GM12878 (cell line): ENCODE measurements at regions of chr9 and their contacts with region 1.

Region 1: GRCh38 chr9:68584189-68585033 is 43.7 kb upstream of the TMEM252 start:
- DNase-seq: peak; percentile 58
- ATAC-seq: peak; percentile 100
- H3K4me3 ChIP-seq: no peak overlapping the region
- H3K27ac ChIP-seq: no peak overlapping the region
- H3K4me1 ChIP-seq: no peaks in the 10 kb centered on the region
- H3K27me3 ChIP-seq: no peaks in the 10 kb centered on the region
- CTCF ChIP-seq: peak; percentile 99 to 100 (median 100); a peak in 5 of 6 replicates
- EP300 ChIP-seq: no peak
- POLR2A ChIP-seq: no peak
- RAD21 ChIP-seq: peak; percentile 100

Region 2: DNA sequence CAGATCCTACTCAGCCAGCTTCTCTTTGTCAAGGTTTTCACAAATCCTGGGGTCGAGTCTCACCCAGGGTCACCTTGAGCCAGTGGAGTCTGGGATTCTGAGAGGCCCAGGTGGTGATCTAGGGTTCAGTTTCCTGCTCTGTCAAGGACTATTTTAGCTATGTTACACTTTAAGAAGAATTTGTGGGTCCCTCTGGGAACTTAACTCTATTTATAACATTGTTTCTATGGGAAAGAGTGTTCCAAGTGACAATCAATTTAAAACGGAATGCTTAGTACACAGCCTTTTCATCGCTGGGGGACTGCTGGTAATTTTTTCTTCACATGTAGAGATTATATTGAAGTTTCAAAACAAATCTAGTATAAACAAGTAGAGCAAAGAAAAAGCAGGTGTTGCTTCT is 16.8 kb before region 1 on chr9:
- CTCF ChIA-PET with region 1: interaction called, 19 read pairs
- POLR2A ChIA-PET with region 1: no interaction called
- RAD21 ChIA-PET with region 1: interaction called, 6 read pairs
- SMC1A ChIA-PET with region 1: interaction called, 4 read pairs
- in situ Hi-C with region 1: no loop called
- intact Hi-C with region 1: no loop called
- DNase-seq: no peak
- ATAC-seq: no peak
- H3K4me3 ChIP-seq: no peak overlapping the region
- H3K27ac ChIP-seq: no peak overlapping the region
- H3K4me1 ChIP-seq: no peaks in the 10 kb centered on the region
- H3K27me3 ChIP-seq: peaks cover 4 to 8% of the 10 kb centered on the region in 2 experiments
- CTCF ChIP-seq: no peak
- EP300 ChIP-seq: no peak
- POLR2A ChIP-seq: no peak
- RAD21 ChIP-seq: no peak

Region 3: DNA sequence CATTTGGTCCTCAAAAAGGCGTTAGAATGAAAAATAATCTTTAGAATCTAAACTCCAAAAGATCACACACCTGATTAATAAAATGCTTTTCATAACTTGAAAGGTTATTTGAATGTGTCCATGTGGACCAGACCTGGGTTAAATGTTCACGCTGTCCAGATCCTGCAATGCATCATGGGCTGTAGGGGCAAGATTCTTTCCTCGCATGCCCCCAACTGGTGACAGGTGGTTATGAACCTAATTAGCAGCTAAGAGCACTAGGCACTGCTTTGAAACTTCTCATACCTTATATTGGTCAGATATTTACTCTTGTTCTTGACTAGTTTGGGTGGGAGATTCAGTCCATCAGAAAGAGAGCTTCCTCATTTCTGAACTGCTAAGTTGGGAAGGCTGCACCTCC is 101.4 kb after region 1 on chr9:
- CTCF ChIA-PET with region 1: interaction called, 68 read pairs
- POLR2A ChIA-PET with region 1: no interaction called
- RAD21 ChIA-PET with region 1: interaction called, 9 read pairs
- SMC1A ChIA-PET with region 1: interaction called, 61 read pairs
- in situ Hi-C with region 1: loop called (anchors 5 kb)
- intact Hi-C with region 1: loop called (anchors 1 kb)
- DNase-seq: no peak
- ATAC-seq: peak; percentile 99
- H3K4me3 ChIP-seq: no peak overlapping the region
- H3K27ac ChIP-seq: no peak overlapping the region
- H3K4me1 ChIP-seq: no peaks in the 10 kb centered on the region
- H3K27me3 ChIP-seq: no peaks in the 10 kb centered on the region
- CTCF ChIP-seq: peak; percentile 73 to 86 (median 77)
- EP300 ChIP-seq: no peak
- POLR2A ChIP-seq: no peak
- RAD21 ChIP-seq: peak; percentile 90

Region 4: GRCh38 chr9:68762570-68762969 is 178.2 kb after region 1 on chr9:
- CTCF ChIA-PET with region 1: no interaction called
- POLR2A ChIA-PET with region 1: no interaction called
- RAD21 ChIA-PET with region 1: no interaction called
- SMC1A ChIA-PET with region 1: no interaction called
- in situ Hi-C with region 1: loop called (anchors 5 kb)
- intact Hi-C with region 1: no loop called
- DNase-seq: no peak
- ATAC-seq: peak; percentile 51; the same call in 2 of the 3 replicates
- H3K4me3 ChIP-seq: no peak overlapping the region
- H3K27ac ChIP-seq: no peak overlapping the region
- H3K4me1 ChIP-seq: peaks cover 3% of the 10 kb centered on the region; the same call in 1 of the 2 replicates
- H3K27me3 ChIP-seq: no peaks in the 10 kb centered on the region
- CTCF ChIP-seq: no peak
- EP300 ChIP-seq: no peak
- POLR2A ChIP-seq: no peak
- RAD21 ChIP-seq: no peak

Region 5: DNA sequence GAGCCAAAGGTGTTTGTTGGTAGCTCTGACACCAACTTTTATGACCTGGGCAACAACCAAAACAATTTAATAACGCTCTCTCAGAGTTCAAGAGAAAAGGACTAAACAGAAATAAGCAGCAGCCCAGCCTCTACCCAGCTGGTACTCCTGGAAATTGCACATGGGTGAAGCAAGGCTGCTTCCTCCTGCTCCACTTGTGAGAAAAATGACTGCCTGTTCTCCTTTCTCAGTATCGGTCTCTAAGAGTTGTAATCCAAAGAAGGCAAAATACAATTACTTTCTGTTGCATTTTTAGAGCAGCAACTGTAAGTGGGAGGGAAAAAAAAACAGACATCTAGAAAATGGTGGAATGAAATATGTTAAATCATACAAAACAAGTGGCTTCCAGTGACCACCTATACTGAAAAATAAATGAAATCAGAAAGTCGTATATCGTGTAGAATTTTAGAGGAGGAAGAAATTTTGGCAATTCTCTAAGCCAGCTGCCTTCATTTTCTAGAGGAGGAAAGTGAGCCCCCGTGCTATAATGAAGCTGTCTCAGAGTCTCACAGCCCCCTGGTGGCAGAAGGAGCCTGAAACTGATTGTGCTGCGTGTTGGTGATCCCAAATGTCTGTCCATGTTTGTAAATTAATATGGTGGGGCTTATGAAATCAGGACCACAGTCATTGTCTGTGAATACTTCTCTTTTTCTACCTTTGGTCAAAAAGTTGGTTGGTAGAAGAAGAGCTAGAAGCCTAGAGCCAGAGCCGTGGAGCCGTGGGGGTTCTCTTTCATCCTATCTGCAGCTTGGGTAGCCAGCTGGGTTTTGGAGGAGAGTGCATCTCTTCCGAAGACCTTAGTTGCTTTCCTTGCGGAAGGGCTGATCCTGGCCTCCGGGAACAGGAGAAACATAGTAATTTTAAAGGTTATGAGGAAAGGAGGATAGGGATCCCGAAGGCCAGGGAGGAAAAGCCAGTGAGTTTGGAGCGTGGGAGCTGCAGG is 260.5 kb after region 1 on chr9:
- CTCF ChIA-PET with region 1: interaction called, 4 read pairs
- POLR2A ChIA-PET with region 1: no interaction called
- RAD21 ChIA-PET with region 1: no interaction called
- SMC1A ChIA-PET with region 1: no interaction called
- in situ Hi-C with region 1: loop called (anchors 5 kb)
- intact Hi-C with region 1: loop called (anchors 5 kb)
- DNase-seq: no peak
- ATAC-seq: peak; percentile 73
- H3K4me3 ChIP-seq: peak overlapping the region; percentile 21; the same call in 1 of the 2 replicates
- H3K27ac ChIP-seq: peak overlapping the region; percentile 32; the same call in 1 of the 2 replicates
- H3K4me1 ChIP-seq: peaks cover 19% of the 10 kb centered on the region
- H3K27me3 ChIP-seq: no peaks in the 10 kb centered on the region
- CTCF ChIP-seq: peak; percentile 52 to 63 (median 54)
- EP300 ChIP-seq: no peak
- POLR2A ChIP-seq: no peak
- RAD21 ChIP-seq: peak; percentile 69

Region 6: GRCh38 chr9:68949271-68950000 is 365.0 kb after region 1 on chr9:
- CTCF ChIA-PET with region 1: interaction called, 15 read pairs
- POLR2A ChIA-PET with region 1: no interaction called
- RAD21 ChIA-PET with region 1: interaction called, 11 read pairs
- SMC1A ChIA-PET with region 1: interaction called, 14 read pairs
- in situ Hi-C with region 1: no loop called
- intact Hi-C with region 1: loop called (anchors 1 kb)
- DNase-seq: peak; percentile 45
- ATAC-seq: peak; percentile 57
- H3K4me3 ChIP-seq: no peak overlapping the region
- H3K27ac ChIP-seq: peak overlapping the region; percentile 54
- H3K4me1 ChIP-seq: peaks cover 44% of the 10 kb centered on the region
- H3K27me3 ChIP-seq: no peaks in the 10 kb centered on the region; a peak in 1 of 4 replicates
- CTCF ChIP-seq: peak; percentile 14 to 56 (median 49); a peak in 5 of 6 replicates
- EP300 ChIP-seq: no peak
- POLR2A ChIP-seq: no peak
- RAD21 ChIP-seq: peak; percentile 77